Body of pancreas (tissue), 4 donors: ENCODE measurements at regions of chr9 and their contacts with region 1.

Region 1: DNA sequence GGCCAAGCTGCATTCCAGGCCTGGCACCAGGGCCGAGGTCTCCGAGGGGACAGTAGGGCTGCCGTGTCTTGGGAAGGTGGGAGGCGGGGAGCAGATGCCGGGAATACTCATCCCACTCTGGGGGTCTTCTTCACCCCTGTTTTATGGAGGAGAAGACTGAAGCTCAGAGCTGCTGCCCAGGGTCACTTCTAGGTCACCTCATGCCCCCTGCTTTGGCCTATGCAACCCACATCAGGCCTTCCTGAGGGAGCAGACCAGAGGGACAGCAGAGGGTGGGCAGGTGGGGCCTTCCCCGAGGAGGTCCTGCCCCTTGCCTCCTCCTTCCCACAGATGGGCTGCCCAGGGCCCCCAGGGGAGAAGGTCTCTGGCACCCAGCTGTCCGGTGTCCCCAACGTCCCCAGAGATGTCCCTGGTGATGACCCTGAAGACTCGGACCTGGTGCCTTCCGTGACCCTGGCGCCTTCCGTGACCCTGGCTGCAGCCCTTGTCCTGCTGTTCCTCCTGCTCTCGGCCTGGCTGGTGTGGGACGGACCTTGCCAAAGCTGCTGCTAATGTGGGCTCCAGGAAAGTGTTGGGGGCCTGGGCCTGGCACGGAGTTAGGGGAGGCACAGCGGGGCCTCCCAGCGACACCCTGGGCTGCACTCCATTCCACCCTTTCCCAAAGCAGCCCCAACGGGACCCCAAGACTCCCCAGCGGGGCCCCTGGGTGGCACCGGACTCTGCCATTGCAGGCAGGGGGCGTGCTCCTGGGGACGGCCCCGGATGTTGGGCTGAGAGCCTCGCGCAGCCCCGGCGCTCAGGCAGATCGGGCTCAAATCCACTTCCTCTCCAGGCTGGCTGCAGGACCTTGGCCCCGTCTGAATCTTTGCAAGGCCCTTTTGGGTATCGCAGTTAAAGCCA is 6.7 kb upstream of the SLC2A6 start:
- DNase-seq: no peak
- ATAC-seq: peak; percentile 14
- H3K4me3 ChIP-seq: no peak overlapping the region
- H3K27ac ChIP-seq: peak overlapping the region in 2 of 4 donors; percentile 18 to 39
- H3K4me1 ChIP-seq: peaks cover 18% of the 10 kb centered on the region
- H3K27me3 ChIP-seq: no peaks in the 10 kb centered on the region
- CTCF ChIP-seq: no peak
- POLR2A ChIP-seq: no peak

Region 2: GRCh38 chr9:133184962-133185361 is 300.6 kb before region 1 on chr9:
- intact Hi-C with region 1: loop called (anchors 5 kb)
- DNase-seq: peak; percentile 38 to 65 (median 50)
- ATAC-seq: peak; percentile 77
- H3K4me3 ChIP-seq: no peak overlapping the region
- H3K27ac ChIP-seq: no peak overlapping the region
- H3K4me1 ChIP-seq: no peaks in the 10 kb centered on the region
- H3K27me3 ChIP-seq: no peaks in the 10 kb centered on the region
- CTCF ChIP-seq: peak in 6 of 7 experiments; percentile 43 to 67 (median 60)
- POLR2A ChIP-seq: no peak

Region 3: GRCh38 chr9:133335878-133336811 is 149.5 kb before region 1 on chr9 and contains the start of gene SURF6:
- intact Hi-C with region 1: loop called (anchors 10 kb)
- DNase-seq: peak; percentile 88 to 92 (median 91)
- ATAC-seq: peak; percentile 98
- H3K4me3 ChIP-seq: peak within 1 kb of the TSS; percentile 91 to 99
- H3K27ac ChIP-seq: peak within 1 kb of the TSS; percentile 2 to 79 (median 66)
- H3K4me1 ChIP-seq: peaks cover 24% of the 10 kb centered on the region
- H3K27me3 ChIP-seq: no peaks in the 10 kb centered on the region
- CTCF ChIP-seq: peak in 3 of 7 experiments; percentile 4 to 37 (median 31)
- POLR2A ChIP-seq: peak; percentile 50 to 69 (median 66)
- total RNA-seq, gene SURF6: 20.8 to 37.9 TPM

Region 4: DNA sequence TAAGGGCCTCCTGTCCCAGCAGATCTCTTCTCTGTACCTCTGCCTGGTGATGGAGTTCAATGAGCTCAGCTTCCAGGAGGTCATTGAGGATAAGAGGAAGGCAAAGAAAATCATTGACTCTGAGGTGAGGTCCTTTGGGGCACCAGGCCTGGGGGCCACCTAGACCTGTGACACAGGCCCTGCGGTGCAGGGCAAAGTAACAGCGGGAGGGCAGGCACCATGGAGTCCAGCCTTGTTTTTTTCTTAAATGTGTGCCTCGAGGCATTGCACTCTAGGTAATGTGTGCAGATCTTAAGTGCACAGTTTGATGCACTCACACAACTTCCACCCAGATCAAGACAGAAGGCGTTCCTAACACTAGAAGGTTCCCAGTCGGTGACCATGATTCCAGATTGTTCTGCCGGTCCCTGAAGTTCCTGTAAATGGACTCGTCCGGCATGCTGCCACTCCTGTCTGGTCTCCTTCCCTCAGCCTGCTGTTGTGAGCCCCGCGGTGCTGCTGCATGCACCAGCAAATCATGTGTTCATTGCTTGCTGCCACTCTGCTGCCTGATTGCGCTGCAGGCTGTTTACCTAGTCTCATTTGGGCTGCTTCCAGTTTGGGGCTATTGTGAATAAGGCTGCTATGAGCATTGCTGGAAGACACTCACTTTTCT is 98.1 kb before region 1 on chr9:
- intact Hi-C with region 1: no loop called
- DNase-seq: no peak
- ATAC-seq: no peak
- H3K4me3 ChIP-seq: no peak overlapping the region
- H3K27ac ChIP-seq: no peak overlapping the region
- H3K4me1 ChIP-seq: no peaks in the 10 kb centered on the region
- H3K27me3 ChIP-seq: no peaks in the 10 kb centered on the region
- CTCF ChIP-seq: no peak
- POLR2A ChIP-seq: no peak

Region 5: GRCh38 chr9:133406480-133407307 is 78.9 kb before region 1 on chr9:
- intact Hi-C with region 1: loop called (anchors 5 kb)
- DNase-seq: peak; percentile 79 to 81 (median 81)
- ATAC-seq: peak; percentile 86
- H3K4me3 ChIP-seq: no peak overlapping the region
- H3K27ac ChIP-seq: no peak overlapping the region
- H3K4me1 ChIP-seq: no peaks in the 10 kb centered on the region
- H3K27me3 ChIP-seq: no peaks in the 10 kb centered on the region
- CTCF ChIP-seq: peak; percentile 81 to 92 (median 89)
- POLR2A ChIP-seq: no peak